GM12878 (cell line): ENCODE measurements at regions of chr1 and their contacts with region 1.

Region 1: DNA sequence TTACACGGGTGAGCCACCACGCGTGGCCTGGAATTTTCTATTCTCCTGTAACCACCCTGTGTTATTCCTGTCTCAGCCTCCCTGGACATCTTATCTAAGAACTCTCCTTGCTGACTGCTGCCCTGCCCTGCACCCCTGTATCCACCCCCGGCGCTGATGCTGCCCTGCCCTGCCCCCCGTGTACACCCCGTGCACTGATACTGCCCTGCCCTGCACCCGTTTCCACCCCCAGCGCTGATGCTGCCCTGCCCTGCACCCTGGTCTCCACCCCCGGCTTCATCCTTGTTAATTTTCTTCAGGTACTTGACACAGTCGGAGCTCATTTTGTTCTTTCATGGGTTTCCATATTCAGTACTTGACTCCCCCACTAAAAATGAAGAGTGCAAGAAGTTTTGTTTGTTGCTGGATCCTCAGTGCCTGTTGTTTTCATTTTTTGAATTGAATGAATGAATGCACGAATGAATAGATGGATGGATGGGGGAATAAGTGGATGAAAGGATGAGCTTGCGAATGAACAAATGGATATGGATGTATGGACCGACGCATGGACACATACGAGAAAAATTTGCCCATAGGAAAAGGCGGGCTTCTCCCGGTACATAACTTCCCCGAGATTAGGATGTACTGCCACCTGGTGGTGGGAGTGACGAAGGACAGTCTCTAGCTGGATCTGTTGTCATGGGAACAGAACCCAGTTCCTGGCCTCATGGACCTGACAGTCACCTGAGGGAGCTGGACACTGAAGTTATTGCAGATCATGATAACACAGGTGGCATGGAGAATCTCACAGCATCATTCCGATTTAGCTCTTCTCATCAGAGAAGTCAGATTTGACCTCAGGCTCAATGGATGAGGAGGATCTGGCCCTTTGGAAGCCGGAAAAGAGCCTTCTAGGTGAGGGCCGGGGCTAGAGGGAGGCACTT is 14.9 kb downstream of the AADACL4 start:
- DNase-seq: peak; percentile 30
- ATAC-seq: peak; percentile 89
- H3K4me3 ChIP-seq: no peak overlapping the region
- H3K27ac ChIP-seq: no peak overlapping the region
- H3K4me1 ChIP-seq: no peaks in the 10 kb centered on the region
- H3K27me3 ChIP-seq: no peaks in the 10 kb centered on the region
- CTCF ChIP-seq: peak; percentile 87 to 94 (median 89)
- EP300 ChIP-seq: no peak
- POLR2A ChIP-seq: no peak
- RAD21 ChIP-seq: peak; percentile 84

Region 2: GRCh38 chr1:12275369-12275768 is 383.4 kb before region 1 on chr1:
- CTCF ChIA-PET with region 1: interaction called, 74 read pairs
- POLR2A ChIA-PET with region 1: no interaction called
- RAD21 ChIA-PET with region 1: interaction called, 8 read pairs
- SMC1A ChIA-PET with region 1: interaction called, 15 read pairs
- in situ Hi-C with region 1: no loop called
- intact Hi-C with region 1: loop called (anchors 1 kb)
- DNase-seq: no peak
- ATAC-seq: peak; percentile 53; the same call in 1 of the 3 replicates
- H3K4me3 ChIP-seq: no peak overlapping the region
- H3K27ac ChIP-seq: no peak overlapping the region
- H3K4me1 ChIP-seq: no peaks in the 10 kb centered on the region
- H3K27me3 ChIP-seq: no peaks in the 10 kb centered on the region
- CTCF ChIP-seq: peak; percentile 56 to 67 (median 60)
- EP300 ChIP-seq: no peak
- POLR2A ChIP-seq: no peak
- RAD21 ChIP-seq: peak; percentile 44

Region 3: GRCh38 chr1:12314333-12314903 is 344.4 kb before region 1 on chr1:
- CTCF ChIA-PET with region 1: interaction called, 60 read pairs
- POLR2A ChIA-PET with region 1: no interaction called
- RAD21 ChIA-PET with region 1: interaction called, 8 read pairs
- SMC1A ChIA-PET with region 1: interaction called, 17 read pairs
- in situ Hi-C with region 1: no loop called
- intact Hi-C with region 1: loop called (anchors 1 kb)
- DNase-seq: no peak
- ATAC-seq: peak; percentile 40; the same call in 1 of the 3 replicates
- H3K4me3 ChIP-seq: no peak overlapping the region
- H3K27ac ChIP-seq: no peak overlapping the region
- H3K4me1 ChIP-seq: no peaks in the 10 kb centered on the region
- H3K27me3 ChIP-seq: no peaks in the 10 kb centered on the region
- CTCF ChIP-seq: peak in 2 of 3 experiments; percentile 47 to 52; a peak in 3 of 6 replicates
- EP300 ChIP-seq: no peak
- POLR2A ChIP-seq: no peak
- RAD21 ChIP-seq: peak; percentile 53

Region 4: GRCh38 chr1:12643079-12643478 is 15.7 kb before region 1 on chr1:
- CTCF ChIA-PET with region 1: interaction called, 13 read pairs
- POLR2A ChIA-PET with region 1: no interaction called
- RAD21 ChIA-PET with region 1: no interaction called
- SMC1A ChIA-PET with region 1: no interaction called
- in situ Hi-C with region 1: no loop called
- intact Hi-C with region 1: no loop called
- DNase-seq: no peak
- ATAC-seq: no peak
- H3K4me3 ChIP-seq: no peak overlapping the region
- H3K27ac ChIP-seq: no peak overlapping the region
- H3K4me1 ChIP-seq: no peaks in the 10 kb centered on the region
- H3K27me3 ChIP-seq: no peaks in the 10 kb centered on the region
- CTCF ChIP-seq: no peak
- EP300 ChIP-seq: no peak
- POLR2A ChIP-seq: no peak
- RAD21 ChIP-seq: no peak

Region 5: DNA sequence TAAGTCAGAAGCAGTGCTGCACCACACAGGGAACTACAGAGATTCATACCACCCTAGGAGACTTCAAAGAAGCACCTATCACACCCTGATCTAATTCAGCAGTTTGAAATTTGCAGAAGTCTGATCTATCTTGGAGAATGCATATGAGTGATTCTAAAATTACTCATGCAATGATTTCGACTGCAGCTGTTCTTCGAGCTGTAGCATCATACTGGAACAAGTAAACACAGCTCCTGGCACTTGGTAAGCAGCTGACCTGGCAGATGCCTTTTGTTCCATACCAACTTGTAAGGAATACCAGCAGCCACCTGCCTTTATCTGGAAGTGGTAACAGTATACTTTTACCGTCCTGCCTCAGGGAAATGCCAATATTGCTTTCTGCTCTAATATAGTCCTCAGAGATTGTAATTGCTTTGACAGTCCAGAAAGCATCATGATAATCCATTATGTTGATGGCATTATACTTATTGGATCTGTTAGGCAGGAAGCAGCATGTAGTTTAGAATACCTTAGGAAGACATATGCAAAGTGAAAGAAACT is 10.8 kb after region 1 on chr1:
- CTCF ChIA-PET with region 1: interaction called, 15 read pairs
- POLR2A ChIA-PET with region 1: no interaction called
- RAD21 ChIA-PET with region 1: interaction called, 4 read pairs
- SMC1A ChIA-PET with region 1: interaction called, 4 read pairs
- in situ Hi-C with region 1: no loop called
- intact Hi-C with region 1: no loop called
- DNase-seq: no peak
- ATAC-seq: no peak
- H3K4me3 ChIP-seq: no peak overlapping the region
- H3K27ac ChIP-seq: no peak overlapping the region
- H3K4me1 ChIP-seq: no peaks in the 10 kb centered on the region
- H3K27me3 ChIP-seq: no peaks in the 10 kb centered on the region
- CTCF ChIP-seq: no peak
- EP300 ChIP-seq: no peak
- POLR2A ChIP-seq: no peak
- RAD21 ChIP-seq: no peak

Region 6: DNA sequence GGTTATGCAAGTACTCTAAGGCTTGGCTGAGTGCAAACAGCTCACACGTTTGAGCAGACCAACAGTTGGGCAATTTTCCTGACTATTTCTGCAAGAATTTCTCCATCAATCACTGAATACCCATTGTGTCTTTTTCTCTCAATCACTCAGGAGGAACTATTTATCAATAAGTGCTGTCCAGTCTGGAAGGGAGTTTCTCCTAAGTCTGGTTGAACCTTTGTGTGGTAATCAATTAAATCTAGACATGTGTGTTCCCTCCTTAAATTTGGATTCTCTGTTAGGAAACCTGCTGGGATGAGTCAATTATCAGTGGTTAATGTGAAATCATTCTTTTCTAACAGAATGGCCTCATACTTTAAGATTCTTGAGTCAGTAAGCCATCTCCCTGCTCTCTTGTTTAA is 50.3 kb after region 1 on chr1:
- CTCF ChIA-PET with region 1: no interaction called
- POLR2A ChIA-PET with region 1: no interaction called
- RAD21 ChIA-PET with region 1: no interaction called
- SMC1A ChIA-PET with region 1: no interaction called
- in situ Hi-C with region 1: no loop called
- intact Hi-C with region 1: no loop called
- DNase-seq: no peak
- ATAC-seq: no peak
- H3K4me3 ChIP-seq: no peak overlapping the region
- H3K27ac ChIP-seq: no peak overlapping the region
- H3K4me1 ChIP-seq: no peaks in the 10 kb centered on the region
- H3K27me3 ChIP-seq: no peaks in the 10 kb centered on the region
- CTCF ChIP-seq: no peak
- EP300 ChIP-seq: no peak
- POLR2A ChIP-seq: no peak
- RAD21 ChIP-seq: no peak